ENCODE measurements at regions of chr9 and their contacts with region 1.

Region 1: GRCh38 chr9:31500422-31500821 is 884.0 kb upstream of the ACO1 start:
- DNase-seq: no peak
- ATAC-seq: no peak
- H3K4me3 ChIP-seq: no peak overlapping the region
- H3K27ac ChIP-seq: no peak overlapping the region
- H3K4me1 ChIP-seq: no peaks in the 10 kb centered on the region
- H3K27me3 ChIP-seq: no peaks in the 10 kb centered on the region

Region 2: DNA sequence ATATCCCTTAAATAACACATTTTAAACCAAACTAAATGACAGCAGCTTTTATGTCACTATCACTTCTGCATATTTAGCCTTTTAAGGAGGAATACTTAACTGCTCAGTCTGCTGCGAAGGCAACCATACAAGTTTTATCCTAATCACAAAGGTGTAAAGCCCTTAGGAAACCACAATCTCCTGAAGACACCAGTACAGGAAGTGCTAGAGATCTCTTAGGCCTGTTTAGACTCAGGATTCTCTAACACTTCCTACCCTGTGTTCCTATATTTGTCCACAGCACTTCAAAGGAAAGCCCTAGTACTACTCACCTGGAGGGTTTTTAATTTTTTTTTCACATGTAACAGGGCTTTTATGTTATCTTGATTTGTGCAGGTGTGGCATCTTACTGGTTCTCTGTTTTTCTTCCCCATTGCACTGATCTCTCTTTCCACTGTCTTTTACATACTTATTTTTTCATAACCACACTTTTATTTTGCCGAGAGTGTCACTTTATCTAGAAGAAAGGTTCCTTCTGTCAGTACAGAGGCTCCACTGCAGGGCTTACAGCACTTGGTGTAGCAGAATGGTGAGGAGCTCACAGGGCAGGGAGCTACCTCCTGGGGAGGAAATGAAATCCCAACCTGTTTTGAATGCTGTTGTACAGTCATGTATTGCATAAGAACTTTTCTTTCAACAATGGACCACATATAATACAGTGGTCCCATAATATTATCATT is 176.5 kb before region 1 on chr9:
- intact Hi-C with region 1: no loop called
- DNase-seq: no peak
- ATAC-seq: no peak
- H3K4me3 ChIP-seq: no peak overlapping the region
- H3K27ac ChIP-seq: no peak overlapping the region
- H3K4me1 ChIP-seq: no peaks in the 10 kb centered on the region
- H3K27me3 ChIP-seq: no peaks in the 10 kb centered on the region

Region 3: DNA sequence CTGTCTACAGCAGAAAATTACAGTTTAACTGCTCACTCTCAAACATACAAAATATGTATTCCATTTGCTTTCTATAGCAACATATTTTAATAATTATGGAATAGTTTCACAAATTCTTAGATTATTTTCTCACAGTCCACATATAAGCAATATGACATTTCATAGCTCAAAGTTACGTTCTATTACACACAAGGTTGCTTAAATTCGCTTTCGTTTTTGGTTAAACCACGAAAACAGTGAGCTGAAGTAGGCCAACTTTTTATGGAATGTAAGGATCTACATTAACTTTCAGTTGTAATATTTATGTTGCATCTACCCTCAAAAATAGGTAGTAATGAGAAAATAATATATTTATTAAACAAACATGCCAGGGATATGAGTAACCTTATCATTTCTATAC is 82.0 kb before region 1 on chr9:
- intact Hi-C with region 1: loop called in 1 of 2 experiments (anchors 10 kb)
- DNase-seq: no peak
- ATAC-seq: no peak
- H3K4me3 ChIP-seq: no peak overlapping the region
- H3K27ac ChIP-seq: no peak overlapping the region
- H3K4me1 ChIP-seq: no peaks in the 10 kb centered on the region
- H3K27me3 ChIP-seq: no peaks in the 10 kb centered on the region